ENCODE measurements at regions of chr2 and their contacts with region 1.

Region 1: DNA sequence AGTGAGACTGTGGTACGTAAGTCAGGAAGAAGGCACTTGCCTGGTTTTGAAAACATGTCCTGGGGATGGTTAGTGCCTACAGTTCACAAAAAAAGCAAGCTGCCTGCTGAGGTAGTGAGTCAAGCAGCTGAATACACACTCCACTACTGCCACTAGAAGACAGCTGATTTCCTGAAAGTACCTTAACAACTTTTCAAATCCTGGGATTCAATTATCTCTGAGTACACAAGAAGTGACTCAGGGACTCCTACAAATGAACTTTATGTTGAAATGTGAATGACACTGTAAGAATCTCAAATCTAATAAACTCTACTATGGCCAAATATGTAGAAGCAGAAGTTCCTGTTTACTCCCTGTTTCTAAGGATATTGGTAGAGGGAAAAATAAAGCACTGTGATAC is 58.0 kb upstream of the ARL5A start:
- DNase-seq: no peak
- CTCF ChIP-seq: no peak

Region 2: DNA sequence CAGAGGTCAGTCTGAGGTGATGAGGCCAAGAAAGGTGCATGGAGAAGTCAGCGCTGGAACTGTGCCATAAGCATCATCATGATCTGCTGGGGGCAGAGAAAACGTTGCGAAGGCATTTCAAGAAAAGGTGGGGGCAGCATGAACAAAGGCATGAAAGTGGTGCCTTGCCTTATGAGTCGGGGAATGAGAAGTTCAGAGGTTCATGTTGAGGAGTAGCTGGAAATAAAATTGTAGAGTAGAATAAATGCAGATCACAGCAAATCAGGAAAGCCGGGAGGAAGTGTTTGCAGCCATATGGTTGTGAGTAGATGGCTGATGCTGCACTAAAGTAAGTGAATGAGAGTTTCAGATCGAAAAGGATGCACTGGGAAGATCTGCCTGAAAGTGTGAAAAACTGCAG is 14.1 kb after region 1 on chr2:
- CTCF ChIA-PET with region 1: interaction called, 25 read pairs
- POLR2A ChIA-PET with region 1: no interaction called
- DNase-seq: no peak
- CTCF ChIP-seq: no peak